ENCODE measurements at regions of chr1 and their contacts with region 1.

Region 1: DNA sequence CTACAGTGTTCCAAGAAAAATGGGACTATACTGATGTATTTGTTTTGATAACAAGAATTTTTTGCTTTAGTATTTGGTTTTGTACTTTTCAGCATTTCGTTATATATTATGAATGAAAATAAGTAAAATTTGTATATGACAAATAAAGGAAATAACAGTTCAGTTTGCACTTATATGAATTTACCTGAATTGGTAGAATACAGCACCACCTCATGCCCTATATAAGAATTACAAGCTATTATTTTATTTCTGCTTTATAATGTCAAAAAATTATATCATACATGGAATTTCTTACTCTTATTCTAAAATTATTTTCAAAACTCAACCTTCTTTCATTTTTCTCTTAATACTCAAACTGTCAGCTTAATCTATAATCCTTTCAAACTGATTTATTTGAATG is 14.6 kb downstream of the EFCAB7 start:
- DNase-seq: peak in 3 of 9 donors; percentile 2 to 28 (median 19)
- ATAC-seq: no peak
- H3K4me3 ChIP-seq: no peak overlapping the region
- H3K4me3 Mint-ChIP-seq: no peak overlapping the region
- H3K27ac ChIP-seq: no peak overlapping the region
- H3K27ac Mint-ChIP-seq: no peak overlapping the region
- H3K4me1 ChIP-seq: no peaks in the 10 kb centered on the region
- H3K4me1 Mint-ChIP-seq: no peaks in the 10 kb centered on the region
- H3K27me3 ChIP-seq: no peaks in the 10 kb centered on the region
- H3K27me3 Mint-ChIP-seq: no peaks in the 10 kb centered on the region

Region 2: DNA sequence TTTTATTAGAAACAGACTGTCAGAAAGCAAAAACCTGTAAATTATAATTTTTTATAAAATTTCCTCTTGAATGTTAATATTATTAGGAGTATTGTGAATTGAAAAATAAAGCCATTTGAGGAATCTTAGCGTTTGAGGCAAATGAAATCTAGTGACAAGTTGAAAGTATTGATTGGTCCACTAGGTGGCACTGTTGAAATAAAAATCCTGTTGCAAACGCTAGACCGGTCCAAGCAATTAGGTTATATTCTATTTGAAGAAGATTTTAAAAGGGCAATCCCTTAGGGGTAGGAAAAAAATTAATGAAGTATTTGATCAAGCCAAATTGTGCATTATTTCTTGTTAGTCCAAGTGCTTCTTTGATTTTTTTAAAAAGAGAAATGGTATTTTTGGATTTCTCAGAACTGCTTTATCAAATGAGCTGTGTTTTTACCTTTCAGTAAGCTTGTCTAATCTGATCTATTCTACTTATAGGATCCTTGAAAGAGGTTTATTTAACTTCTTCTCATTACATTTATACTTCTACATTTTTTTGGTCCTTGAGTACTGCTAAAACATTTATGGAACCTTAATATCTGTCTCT is 696.3 kb before region 1 on chr1:
- CTCF ChIA-PET with region 1: interaction called, 25 read pairs
- POLR2A ChIA-PET with region 1: no interaction called
- intact Hi-C with region 1: loop called (anchors 1 to 5 kb)
- DNase-seq: peak in 7 of 9 donors; percentile 10 to 56 (median 40)
- ATAC-seq: peak; percentile 67
- H3K4me3 ChIP-seq: no peak overlapping the region
- H3K4me3 Mint-ChIP-seq: no peak overlapping the region
- H3K27ac ChIP-seq: no peak overlapping the region
- H3K27ac Mint-ChIP-seq: no peak overlapping the region
- H3K4me1 ChIP-seq: no peaks in the 10 kb centered on the region
- H3K4me1 Mint-ChIP-seq: no peaks in the 10 kb centered on the region
- H3K27me3 ChIP-seq: no peaks in the 10 kb centered on the region
- H3K27me3 Mint-ChIP-seq: no peaks in the 10 kb centered on the region

Region 3: GRCh38 chr1:62912028-62912638 is 625.8 kb before region 1 on chr1:
- CTCF ChIA-PET with region 1: no interaction called
- POLR2A ChIA-PET with region 1: no interaction called
- intact Hi-C with region 1: loop called in 1 of 2 experiments (anchors 2 kb)
- DNase-seq: no peak
- ATAC-seq: no peak
- H3K4me3 ChIP-seq: no peak overlapping the region
- H3K4me3 Mint-ChIP-seq: no peak overlapping the region
- H3K27ac ChIP-seq: no peak overlapping the region
- H3K27ac Mint-ChIP-seq: no peak overlapping the region
- H3K4me1 ChIP-seq: no peaks in the 10 kb centered on the region
- H3K4me1 Mint-ChIP-seq: peaks cover 0 to 12% (median 10%) of the 10 kb centered on the region in 7 donors
- H3K27me3 ChIP-seq: no peaks in the 10 kb centered on the region
- H3K27me3 Mint-ChIP-seq: peaks cover 4 to 33% (median 13%) of the 10 kb centered on the region in 5 donors

Region 4: GRCh38 chr1:62962901-62963776 is 574.8 kb before region 1 on chr1:
- CTCF ChIA-PET with region 1: no interaction called
- POLR2A ChIA-PET with region 1: no interaction called
- intact Hi-C with region 1: loop called in 1 of 2 experiments (anchors 5 kb)
- DNase-seq: no peak
- ATAC-seq: no peak
- H3K4me3 ChIP-seq: no peak overlapping the region
- H3K4me3 Mint-ChIP-seq: no peak overlapping the region
- H3K27ac ChIP-seq: no peak overlapping the region
- H3K27ac Mint-ChIP-seq: no peak overlapping the region
- H3K4me1 ChIP-seq: no peaks in the 10 kb centered on the region
- H3K4me1 Mint-ChIP-seq: peaks cover 0 to 2% (median 0%) of the 10 kb centered on the region in 7 donors
- H3K27me3 ChIP-seq: no peaks in the 10 kb centered on the region
- H3K27me3 Mint-ChIP-seq: peaks cover 12 to 28% (median 22%) of the 10 kb centered on the region in 5 donors

Region 5: DNA sequence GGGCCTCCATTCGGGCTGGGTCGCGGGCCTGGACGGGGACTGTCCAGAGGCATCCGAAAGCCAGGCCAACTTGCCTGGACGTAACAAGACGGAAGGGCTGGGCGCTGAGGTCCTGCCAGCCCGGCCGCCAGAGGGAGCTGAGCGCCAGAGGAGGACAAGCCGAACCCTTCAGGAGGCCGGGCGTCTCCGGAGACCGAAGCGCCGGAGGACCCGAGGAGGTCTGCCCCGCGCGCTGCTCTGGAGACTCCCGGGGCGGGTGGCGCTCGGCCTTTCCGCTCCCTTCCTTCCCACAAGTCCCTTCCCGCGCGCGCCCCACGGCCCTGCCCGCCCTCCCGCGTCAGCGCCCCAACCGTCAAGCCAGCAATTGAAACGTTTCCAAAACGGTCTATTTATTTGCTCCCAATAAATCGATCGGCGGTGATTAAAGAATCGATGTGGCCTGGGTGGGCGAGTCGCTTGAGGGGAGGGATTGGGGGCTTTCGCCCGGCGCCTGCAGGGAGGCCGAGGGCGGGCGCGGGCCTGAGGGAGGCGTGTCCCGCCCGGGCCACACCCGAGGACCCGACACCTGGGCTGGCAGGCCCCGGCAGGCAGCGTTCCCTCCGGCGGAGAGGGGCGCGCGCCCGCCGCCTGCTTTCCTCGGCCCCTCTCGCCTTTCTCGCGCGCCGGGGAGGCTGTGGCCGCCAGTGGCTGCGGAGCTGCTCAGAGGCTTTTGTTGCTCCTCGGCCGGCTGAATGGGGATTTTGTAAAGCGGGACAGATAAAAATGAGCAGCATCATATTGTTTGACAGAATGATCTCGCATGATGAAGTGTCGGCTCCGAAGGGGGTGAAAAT is 220.7 kb before region 1 on chr1:
- CTCF ChIA-PET with region 1: no interaction called
- POLR2A ChIA-PET with region 1: no interaction called
- intact Hi-C with region 1: loop called (anchors 1 to 2 kb)
- DNase-seq: peak in 5 of 9 donors; percentile 14 to 74 (median 22)
- ATAC-seq: peak; percentile 73
- H3K4me3 ChIP-seq: peak overlapping the region; percentile 25
- H3K4me3 Mint-ChIP-seq: peak overlapping the region; percentile 12 to 83 (median 67)
- H3K27ac ChIP-seq: no peak overlapping the region
- H3K27ac Mint-ChIP-seq: peak overlapping the region in 3 of 9 donors; percentile 39 to 86 (median 79)
- H3K4me1 ChIP-seq: peaks cover 0 to 8% of the 10 kb centered on the region in 2 donors
- H3K4me1 Mint-ChIP-seq: peaks cover 7 to 49% (median 34%) of the 10 kb centered on the region in 7 donors
- H3K27me3 ChIP-seq: peaks cover 18 to 60% of the 10 kb centered on the region in 2 donors
- H3K27me3 Mint-ChIP-seq: peaks cover 75 to 79% (median 76%) of the 10 kb centered on the region in 5 donors

Region 6: DNA sequence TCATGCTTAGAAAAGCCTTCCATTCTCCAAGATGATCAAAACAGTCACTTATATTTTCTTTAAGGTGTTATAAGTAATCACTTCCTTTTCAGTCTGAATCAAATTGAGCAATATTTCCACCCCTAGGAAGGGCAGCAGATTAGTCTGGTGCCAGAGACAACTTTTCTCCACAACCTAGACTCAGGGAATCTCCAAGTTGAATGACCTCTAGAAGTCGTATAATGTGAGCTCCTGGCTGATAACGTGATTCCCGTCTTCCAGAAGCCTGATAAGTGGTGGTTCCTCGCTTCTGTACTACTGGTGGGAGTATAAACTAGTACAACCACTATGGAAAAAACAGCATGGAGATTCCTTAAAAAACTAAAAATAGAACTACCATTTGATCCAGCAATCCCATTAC is 487.1 kb after region 1 on chr1:
- CTCF ChIA-PET with region 1: no interaction called
- POLR2A ChIA-PET with region 1: no interaction called
- intact Hi-C with region 1: no loop called
- DNase-seq: no peak
- ATAC-seq: no peak
- H3K4me3 ChIP-seq: no peak overlapping the region
- H3K4me3 Mint-ChIP-seq: no peak overlapping the region
- H3K27ac ChIP-seq: no peak overlapping the region
- H3K27ac Mint-ChIP-seq: no peak overlapping the region
- H3K4me1 ChIP-seq: peaks cover 0 to 5% of the 10 kb centered on the region in 2 donors
- H3K4me1 Mint-ChIP-seq: peaks cover 0 to 6% (median 3%) of the 10 kb centered on the region in 7 donors
- H3K27me3 ChIP-seq: no peaks in the 10 kb centered on the region
- H3K27me3 Mint-ChIP-seq: peaks cover 0 to 5% (median 0%) of the 10 kb centered on the region in 5 donors